Calu3 (cell line): ENCODE measurements at regions of chr17 and their contacts with region 1.

Region 1: DNA sequence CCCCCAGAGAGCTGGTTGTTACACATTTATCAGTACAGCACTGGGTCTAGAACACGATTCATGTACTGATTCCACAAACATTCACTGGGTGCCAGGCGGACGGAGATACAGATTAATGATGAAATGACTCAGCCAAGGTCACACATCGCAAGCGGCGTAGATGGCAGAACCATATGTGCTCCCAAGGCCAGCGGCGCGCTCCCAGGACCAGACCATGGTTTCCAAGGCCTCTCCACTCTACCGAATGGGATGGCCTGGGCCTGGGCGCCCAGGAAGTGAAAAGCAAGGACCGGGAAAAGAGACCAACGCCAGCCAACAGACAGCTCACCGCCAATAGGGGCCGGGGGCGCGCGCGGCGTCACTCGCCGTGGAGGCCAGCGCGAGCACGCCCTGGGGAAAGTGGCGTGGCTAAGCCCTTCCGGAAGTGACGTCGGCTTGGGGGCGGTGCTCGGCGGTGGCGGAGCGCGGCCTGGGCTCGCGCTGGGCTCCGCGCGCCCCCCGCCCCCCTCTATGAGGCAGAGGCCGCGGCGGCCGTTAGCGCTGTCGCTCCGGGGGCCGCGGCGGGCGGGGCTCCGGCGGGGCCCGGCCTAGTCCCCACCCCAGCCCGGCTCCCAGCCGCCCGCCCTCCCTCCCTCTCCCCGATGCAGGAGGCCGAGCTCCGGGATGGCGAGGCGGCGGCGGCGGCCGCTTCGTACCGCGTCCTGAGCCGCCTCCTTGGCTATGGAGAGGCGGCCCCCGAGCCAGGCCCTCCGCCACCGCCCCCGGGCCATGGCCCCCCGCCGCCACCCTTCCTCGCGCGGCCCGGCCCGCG is at the start of gene SOCS7:
- DNase-seq: peak; percentile 100
- H3K4me3 Mint-ChIP-seq: peak within 1 kb of the TSS; percentile 76
- H3K27ac Mint-ChIP-seq: peak within 1 kb of the TSS; percentile 90
- H3K4me1 Mint-ChIP-seq: peaks cover 59% of the 10 kb centered on the region
- H3K27me3 Mint-ChIP-seq: no peaks in the 10 kb centered on the region
- CTCF ChIP-seq: peak; percentile 10
- total RNA-seq, gene SOCS7: 68.3 and 83.6 TPM in 2 replicates

Region 2: DNA sequence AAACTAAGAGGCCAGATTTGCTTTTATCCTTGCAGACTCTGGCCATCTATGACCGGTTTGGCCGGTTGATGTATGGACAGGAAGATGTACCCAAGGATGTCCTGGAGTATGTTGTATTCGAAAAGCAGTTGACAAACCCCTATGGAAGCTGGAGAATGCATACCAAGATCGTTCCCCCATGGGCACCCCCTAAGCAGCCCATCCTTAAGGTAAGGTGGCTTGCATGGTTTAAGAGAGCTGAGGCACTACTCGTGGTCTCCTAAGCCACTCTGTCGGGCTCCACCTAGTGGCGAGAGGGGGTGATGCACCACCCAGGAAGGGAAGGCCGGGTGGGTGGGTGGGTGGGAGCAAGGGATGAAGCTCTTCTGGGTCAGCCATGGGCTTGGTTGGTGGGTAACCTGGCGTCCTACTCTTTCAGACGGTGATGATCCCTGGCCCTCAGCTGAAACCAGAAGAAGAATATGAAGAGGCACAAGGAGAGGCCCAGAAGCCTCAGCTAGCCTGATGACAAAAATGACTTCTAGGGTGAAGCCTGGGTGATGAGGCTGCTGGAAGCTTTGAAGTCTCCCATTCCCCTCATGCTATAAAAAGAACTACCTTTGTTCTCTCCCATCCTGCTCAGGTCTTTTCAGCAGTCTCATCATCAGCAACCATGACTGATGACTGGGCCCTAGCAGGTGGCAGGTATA is 29.4 kb before region 1 on chr17:
- CTCF ChIA-PET with region 1: interaction called, 14 read pairs
- intact Hi-C with region 1: no loop called
- DNase-seq: peak; percentile 96
- H3K4me3 Mint-ChIP-seq: no peak overlapping the region
- H3K27ac Mint-ChIP-seq: no peak overlapping the region
- H3K4me1 Mint-ChIP-seq: peaks cover 19% of the 10 kb centered on the region
- H3K27me3 Mint-ChIP-seq: no peaks in the 10 kb centered on the region
- CTCF ChIP-seq: peak; percentile 100

Region 3: GRCh38 chr17:38333635-38334295 is 17.9 kb before region 1 on chr17:
- CTCF ChIA-PET with region 1: interaction called, 159 read pairs
- intact Hi-C with region 1: no loop called
- DNase-seq: peak; percentile 89
- H3K4me3 Mint-ChIP-seq: no peak overlapping the region
- H3K27ac Mint-ChIP-seq: no peak overlapping the region
- H3K4me1 Mint-ChIP-seq: no peaks in the 10 kb centered on the region
- H3K27me3 Mint-ChIP-seq: peaks cover 92% of the 10 kb centered on the region
- CTCF ChIP-seq: peak; percentile 99

Region 4: DNA sequence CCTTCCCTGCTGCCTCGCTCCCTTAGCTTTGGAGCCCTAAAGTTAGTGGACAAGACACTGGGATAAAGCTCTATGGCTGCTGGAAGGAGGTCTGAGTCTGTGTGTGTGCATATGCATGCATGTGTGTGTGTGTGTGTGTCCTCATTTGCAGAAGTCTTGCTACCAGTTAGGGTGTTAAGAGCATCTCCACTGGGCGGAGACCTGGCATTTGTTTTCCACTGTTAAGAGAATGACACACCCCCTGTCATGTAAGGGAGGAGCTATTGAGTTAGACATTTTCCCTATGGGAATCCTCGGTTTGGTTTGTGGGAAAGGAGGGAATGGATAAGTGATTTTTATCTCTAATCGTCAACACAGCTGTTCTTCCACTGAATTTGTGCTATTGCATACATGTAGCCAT is 51.9 kb after region 1 on chr17:
- CTCF ChIA-PET with region 1: interaction called, 10 read pairs
- intact Hi-C with region 1: no loop called
- DNase-seq: no peak
- H3K4me3 Mint-ChIP-seq: no peak overlapping the region
- H3K27ac Mint-ChIP-seq: no peak overlapping the region
- H3K4me1 Mint-ChIP-seq: no peaks in the 10 kb centered on the region
- H3K27me3 Mint-ChIP-seq: no peaks in the 10 kb centered on the region
- CTCF ChIP-seq: no peak

Region 5: DNA sequence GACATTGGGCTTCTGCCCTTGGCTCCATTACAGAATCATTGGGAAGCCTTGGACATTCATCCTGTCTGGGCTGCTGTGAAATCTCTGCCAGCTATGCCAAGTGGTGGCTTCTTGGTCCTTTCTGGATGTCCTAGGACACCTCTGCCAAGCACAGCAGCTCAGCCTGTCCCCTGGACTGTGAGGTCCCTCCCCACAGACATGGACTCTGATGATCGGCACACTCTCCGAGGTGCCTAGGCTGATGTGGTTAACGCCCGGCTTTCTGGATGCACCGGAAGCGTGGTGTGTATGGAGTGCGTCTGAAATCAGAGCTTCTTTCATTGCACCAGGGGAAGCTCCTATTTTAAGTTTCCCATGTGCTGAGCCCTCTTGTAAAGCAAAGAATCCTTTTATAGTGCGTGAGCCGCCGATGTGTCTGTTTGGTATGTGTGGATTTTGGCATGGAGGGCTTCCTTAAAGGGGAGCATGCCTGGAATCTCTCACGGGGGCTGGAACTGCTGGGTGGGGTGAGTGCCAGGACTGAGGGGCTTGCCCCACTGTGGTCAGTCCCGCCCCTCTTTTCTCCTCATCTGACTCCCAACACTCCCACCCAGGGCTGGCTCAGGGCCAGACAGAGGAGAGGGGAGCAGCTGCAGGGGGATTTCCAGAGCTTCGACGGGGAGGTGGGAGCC is 69.7 kb after region 1 on chr17:
- CTCF ChIA-PET with region 1: interaction called, 434 read pairs
- intact Hi-C with region 1: no loop called
- DNase-seq: no peak
- H3K4me3 Mint-ChIP-seq: no peak overlapping the region
- H3K27ac Mint-ChIP-seq: no peak overlapping the region
- H3K4me1 Mint-ChIP-seq: peaks cover 29% of the 10 kb centered on the region
- H3K27me3 Mint-ChIP-seq: peaks cover 98% of the 10 kb centered on the region
- CTCF ChIP-seq: no peak

Region 6: GRCh38 chr17:38467491-38467890 is 115.9 kb after region 1 on chr17:
- CTCF ChIA-PET with region 1: no interaction called
- intact Hi-C with region 1: no loop called
- DNase-seq: no peak
- H3K4me3 Mint-ChIP-seq: no peak overlapping the region
- H3K27ac Mint-ChIP-seq: no peak overlapping the region
- H3K4me1 Mint-ChIP-seq: peaks cover 39% of the 10 kb centered on the region
- H3K27me3 Mint-ChIP-seq: peaks cover 14% of the 10 kb centered on the region
- CTCF ChIP-seq: no peak

Region 7: GRCh38 chr17:38591759-38592241 is 240.2 kb after region 1 on chr17:
- CTCF ChIA-PET with region 1: no interaction called
- intact Hi-C with region 1: no loop called
- DNase-seq: peak; percentile 71
- H3K4me3 Mint-ChIP-seq: no peak overlapping the region
- H3K27ac Mint-ChIP-seq: no peak overlapping the region
- H3K4me1 Mint-ChIP-seq: peaks cover 24% of the 10 kb centered on the region
- H3K27me3 Mint-ChIP-seq: peaks cover 80% of the 10 kb centered on the region
- CTCF ChIP-seq: no peak